Endothelial cell of umbilical vein (primary cell): ENCODE measurements at regions of chr2 and their contacts with region 1.

Region 1: GRCh38 chr2:98702127-98702802 is 28.7 kb downstream of the MGAT4A start:
- DNase-seq: peak; percentile 43
- H3K4me3 ChIP-seq: no peak overlapping the region
- H3K27ac ChIP-seq: peak overlapping the region; percentile 50
- H3K4me1 ChIP-seq: peaks cover 36% of the 10 kb centered on the region
- H3K27me3 ChIP-seq: no peaks in the 10 kb centered on the region
- CTCF ChIP-seq: no peak
- POLR2A ChIP-seq: no peak

Region 2: GRCh38 chr2:98654699-98655495 is 47.4 kb before region 1 on chr2:
- CTCF ChIA-PET with region 1: interaction called, 16 read pairs
- POLR2A ChIA-PET with region 1: no interaction called
- dilution Hi-C with region 1: no loop called
- intact Hi-C with region 1: loop called (anchors 5 kb)
- DNase-seq: peak; percentile 62
- H3K4me3 ChIP-seq: no peak overlapping the region
- H3K27ac ChIP-seq: no peak overlapping the region
- H3K4me1 ChIP-seq: no peaks in the 10 kb centered on the region
- H3K27me3 ChIP-seq: no peaks in the 10 kb centered on the region
- CTCF ChIP-seq: no peak
- POLR2A ChIP-seq: no peak

Region 3: DNA sequence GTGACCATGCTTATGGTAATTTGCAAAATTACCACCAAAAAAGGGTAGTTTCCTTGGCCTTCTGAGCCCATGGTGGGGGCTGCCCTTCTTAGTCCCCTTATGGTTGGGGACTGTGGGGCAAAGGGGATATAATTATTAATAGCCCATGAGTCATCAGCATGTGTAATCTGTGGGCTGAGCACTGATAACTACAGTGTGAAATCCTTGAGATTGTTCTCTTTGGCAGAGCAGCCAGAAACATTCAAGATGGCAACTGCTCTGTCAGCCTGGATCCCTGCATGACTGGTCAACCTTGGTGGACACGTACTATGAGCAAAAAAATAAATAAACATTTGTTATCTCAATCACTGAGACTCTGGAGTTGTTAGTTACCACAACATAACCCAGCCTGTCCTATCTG is 32.6 kb before region 1 on chr2:
- CTCF ChIA-PET with region 1: no interaction called
- POLR2A ChIA-PET with region 1: no interaction called
- dilution Hi-C with region 1: no loop called
- intact Hi-C with region 1: no loop called
- DNase-seq: peak; percentile 48
- H3K4me3 ChIP-seq: no peak overlapping the region
- H3K27ac ChIP-seq: no peak overlapping the region
- H3K4me1 ChIP-seq: peaks cover 5% of the 10 kb centered on the region
- H3K27me3 ChIP-seq: no peaks in the 10 kb centered on the region
- CTCF ChIP-seq: no peak
- POLR2A ChIP-seq: no peak

Region 4: DNA sequence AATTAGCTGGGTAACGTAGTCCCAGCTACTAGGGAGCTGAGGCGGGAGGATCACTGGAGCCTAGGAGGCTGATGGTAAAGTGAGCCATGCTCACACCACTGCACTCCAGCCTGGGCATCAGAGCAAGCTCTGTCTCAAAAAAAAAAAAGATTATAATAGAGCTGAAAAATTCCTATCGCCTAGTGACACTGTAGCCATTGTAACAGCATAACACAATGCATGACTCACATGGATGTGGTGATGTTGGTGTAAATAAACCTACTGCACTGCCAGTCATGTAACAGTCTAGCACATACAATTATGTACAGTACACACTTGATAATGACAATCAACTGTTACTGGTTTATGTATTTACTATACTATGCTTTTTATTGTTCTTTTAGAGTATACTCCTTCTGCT is 11.0 kb before region 1 on chr2:
- CTCF ChIA-PET with region 1: interaction called, 9 read pairs
- POLR2A ChIA-PET with region 1: no interaction called
- dilution Hi-C with region 1: no loop called
- intact Hi-C with region 1: loop called (anchors 1 kb)
- DNase-seq: peak; percentile 84
- H3K4me3 ChIP-seq: no peak overlapping the region
- H3K27ac ChIP-seq: peak overlapping the region; percentile 55
- H3K4me1 ChIP-seq: peaks cover 14% of the 10 kb centered on the region
- H3K27me3 ChIP-seq: no peaks in the 10 kb centered on the region
- CTCF ChIP-seq: no peak
- POLR2A ChIP-seq: no peak

Region 5: GRCh38 chr2:98793299-98793698 is 91.0 kb after region 1 on chr2:
- CTCF ChIA-PET with region 1: no interaction called
- POLR2A ChIA-PET with region 1: no interaction called
- dilution Hi-C with region 1: no loop called
- intact Hi-C with region 1: no loop called
- DNase-seq: no peak
- H3K4me3 ChIP-seq: no peak overlapping the region
- H3K27ac ChIP-seq: no peak overlapping the region
- H3K4me1 ChIP-seq: peaks cover 24% of the 10 kb centered on the region
- H3K27me3 ChIP-seq: no peaks in the 10 kb centered on the region
- CTCF ChIP-seq: no peak
- POLR2A ChIP-seq: no peak